Head of caudate nucleus (tissue), 42 donors: ENCODE measurements at regions of chr6 and their contacts with region 1.

Region 1: GRCh38 chr6:31541658-31542521 is at the start of gene DDX39B:
- DNase-seq: peak; percentile 93 to 99 (median 97)

Region 2: GRCh38 chr6:31383149-31383548 is 158.7 kb before region 1 on chr6:
- intact Hi-C with region 1: no loop called
- DNase-seq: peak in 5 of 42 donors; percentile 17 to 52 (median 27)

Region 3: GRCh38 chr6:31493875-31494694 is 47.8 kb before region 1 on chr6:
- intact Hi-C with region 1: loop called (anchors 5 kb)
- DNase-seq: peak; percentile 32 to 85 (median 70)

Region 4: DNA sequence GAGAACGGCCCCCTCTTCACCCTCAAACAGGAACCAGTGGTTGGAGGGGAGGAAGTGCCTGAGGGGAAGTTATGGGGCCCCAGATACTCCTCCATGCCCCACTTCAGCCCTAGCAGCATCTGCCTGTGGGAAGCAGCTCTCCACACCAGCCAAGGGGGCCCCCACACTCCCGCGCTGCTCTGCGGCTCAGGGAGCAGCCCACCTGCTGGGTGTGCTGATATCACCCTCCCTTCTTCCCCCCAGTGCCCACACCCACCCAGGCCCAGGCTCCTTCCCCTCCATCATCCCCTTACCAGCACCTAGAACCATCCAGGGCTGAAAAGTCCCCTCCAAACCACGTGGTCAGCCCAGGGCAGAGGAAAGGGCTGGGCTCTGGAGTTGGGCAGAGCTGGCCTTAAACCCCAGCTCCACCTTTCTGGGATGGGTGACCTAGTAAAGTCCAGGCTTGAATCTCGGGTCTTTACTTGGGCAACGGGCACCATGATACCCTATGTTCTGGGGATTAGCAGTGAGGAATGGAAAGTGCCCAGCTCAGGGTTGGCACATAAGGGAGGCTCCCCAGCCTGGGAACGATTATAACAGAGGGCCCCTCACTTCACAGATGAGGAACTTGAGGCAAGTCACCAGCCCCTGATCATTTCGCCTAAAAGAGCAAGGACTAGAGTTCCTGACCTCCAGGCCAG is 44.9 kb after region 1 on chr6:
- intact Hi-C with region 1: no loop called
- DNase-seq: peak in 13 of 42 donors; percentile 13 to 51 (median 27)

Region 5: GRCh38 chr6:31619805-31620585 is 78.1 kb after region 1 on chr6:
- intact Hi-C with region 1: loop called (anchors 5 kb)
- DNase-seq: peak; percentile 90 to 99 (median 97)